Activated T-helper 1 cell treated with anti-CD3 and anti-CD28 coated beads, Interleukin-12 subunit alpha, Interleukin-12 subunit beta, Interleukin-2, Interleukin-4 antibody, amounts not matched to agents 30 ng/mL and 10 ng/mL and 1 ng/mL, durations not matched to agents 14 hours and 24 hours and 36 hours (primary cell): ENCODE measurements at regions of chr11 and their contacts with region 1.

Region 1: GRCh38 chr11:6402561-6402981 is 12.3 kb downstream of the SMPD1 start:
- DNase-seq: peak; percentile 79
- H3K4me3 Mint-ChIP-seq: peak overlapping the region; percentile 80
- H3K27ac Mint-ChIP-seq: peak overlapping the region; percentile 78
- H3K4me1 Mint-ChIP-seq: peaks cover 58% of the 10 kb centered on the region
- H3K27me3 Mint-ChIP-seq: no peaks in the 10 kb centered on the region

Region 2: GRCh38 chr11:6389921-6390724 is 12.4 kb before region 1 on chr11 and contains the start of gene SMPD1:
- intact Hi-C with region 1: loop called (anchors 1 kb)
- DNase-seq: peak; percentile 89
- H3K4me3 Mint-ChIP-seq: peak within 1 kb of the TSS; percentile 86
- H3K27ac Mint-ChIP-seq: peak within 1 kb of the TSS; percentile 98
- H3K4me1 Mint-ChIP-seq: peaks cover 20% of the 10 kb centered on the region
- H3K27me3 Mint-ChIP-seq: peaks cover 7% of the 10 kb centered on the region
- total RNA-seq, gene SMPD1: 8.5 and 9.4 TPM in 2 replicates

Region 3: GRCh38 chr11:6413791-6414201 is 11.2 kb after region 1 on chr11:
- intact Hi-C with region 1: loop called (anchors 1 kb)
- DNase-seq: no peak
- H3K4me3 Mint-ChIP-seq: no peak overlapping the region
- H3K27ac Mint-ChIP-seq: no peak overlapping the region
- H3K4me1 Mint-ChIP-seq: no peaks in the 10 kb centered on the region
- H3K27me3 Mint-ChIP-seq: no peaks in the 10 kb centered on the region

Region 4: DNA sequence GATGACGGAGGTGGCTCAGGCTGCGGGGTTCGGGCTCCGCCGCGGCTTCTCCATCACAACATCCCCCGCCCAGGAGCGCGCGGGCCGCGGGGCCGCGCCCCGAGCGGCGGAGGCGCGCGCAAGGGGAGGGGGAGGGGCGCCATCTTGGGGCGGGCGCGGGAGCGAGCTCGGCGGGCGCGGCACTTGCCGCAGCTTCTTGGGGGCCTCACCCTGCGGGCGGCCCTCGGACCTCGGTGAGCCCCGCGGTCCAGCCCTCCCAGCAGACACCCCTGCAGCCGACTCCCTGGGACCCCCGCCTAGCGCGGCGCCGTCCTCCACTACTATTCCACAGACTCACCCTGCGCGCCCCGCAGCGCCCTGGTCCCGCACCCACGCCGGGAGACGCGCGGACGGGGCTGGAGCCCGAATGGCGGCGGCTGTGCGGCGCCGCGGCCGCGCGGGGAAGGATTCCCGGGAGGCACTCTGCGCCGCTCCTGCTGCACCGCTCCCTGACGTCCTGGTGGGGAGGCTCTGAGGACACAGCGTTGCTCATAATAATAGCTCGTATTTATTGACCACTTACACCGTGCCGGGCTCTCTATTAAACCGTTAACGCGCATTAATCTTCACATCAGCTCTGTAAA is 16.5 kb after region 1 on chr11 and contains the start of gene APBB1:
- intact Hi-C with region 1: loop called (anchors 2 kb)
- DNase-seq: peak; percentile 63
- H3K4me3 Mint-ChIP-seq: peak within 1 kb of the TSS; percentile 77
- H3K27ac Mint-ChIP-seq: no peak within 1 kb of the TSS
- H3K4me1 Mint-ChIP-seq: no peaks in the 10 kb centered on the region
- H3K27me3 Mint-ChIP-seq: peaks cover 32% of the 10 kb centered on the region
- total RNA-seq, gene APBB1: 16.5 and 16.8 TPM in 2 replicates

Region 5: DNA sequence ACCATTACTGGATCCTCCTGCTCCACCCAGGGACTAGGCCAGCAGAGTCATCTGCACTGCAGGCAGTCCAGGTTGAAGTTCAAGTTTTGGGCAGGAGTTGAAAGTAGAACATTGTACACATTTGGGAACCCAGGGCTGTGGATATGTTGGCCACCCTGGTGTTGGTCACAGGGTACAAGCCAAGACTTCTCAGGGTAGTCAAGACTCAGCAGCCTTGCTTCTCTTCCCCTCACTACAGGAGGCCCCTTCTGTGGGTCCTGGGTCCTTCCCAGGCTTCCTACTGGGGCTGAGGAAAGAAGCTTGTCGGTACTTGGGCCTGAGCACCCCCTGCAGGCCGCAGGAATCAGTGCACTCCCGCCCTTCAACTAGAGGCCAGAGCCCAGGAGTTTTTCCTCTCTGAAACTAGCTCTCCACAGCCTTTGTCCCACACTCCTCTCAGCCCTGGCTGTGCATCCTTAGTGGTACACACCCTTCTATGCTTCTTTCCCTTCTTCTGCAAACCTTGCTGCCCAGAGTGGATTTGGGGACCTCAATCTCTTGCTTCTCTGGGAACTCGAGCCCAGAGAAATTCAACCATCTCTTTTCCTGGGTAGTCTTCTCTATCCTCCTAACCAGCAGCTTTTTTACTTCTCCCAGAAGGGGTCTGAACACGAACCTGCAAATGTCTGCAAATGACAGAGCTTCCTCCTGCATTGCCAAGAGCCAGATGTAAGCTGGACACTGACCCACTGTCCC is 40.9 kb after region 1 on chr11:
- intact Hi-C with region 1: loop called (anchors 5 kb)
- DNase-seq: peak; percentile 39
- H3K4me3 Mint-ChIP-seq: no peak overlapping the region
- H3K27ac Mint-ChIP-seq: no peak overlapping the region
- H3K4me1 Mint-ChIP-seq: no peaks in the 10 kb centered on the region
- H3K27me3 Mint-ChIP-seq: peaks cover 8% of the 10 kb centered on the region

Region 6: DNA sequence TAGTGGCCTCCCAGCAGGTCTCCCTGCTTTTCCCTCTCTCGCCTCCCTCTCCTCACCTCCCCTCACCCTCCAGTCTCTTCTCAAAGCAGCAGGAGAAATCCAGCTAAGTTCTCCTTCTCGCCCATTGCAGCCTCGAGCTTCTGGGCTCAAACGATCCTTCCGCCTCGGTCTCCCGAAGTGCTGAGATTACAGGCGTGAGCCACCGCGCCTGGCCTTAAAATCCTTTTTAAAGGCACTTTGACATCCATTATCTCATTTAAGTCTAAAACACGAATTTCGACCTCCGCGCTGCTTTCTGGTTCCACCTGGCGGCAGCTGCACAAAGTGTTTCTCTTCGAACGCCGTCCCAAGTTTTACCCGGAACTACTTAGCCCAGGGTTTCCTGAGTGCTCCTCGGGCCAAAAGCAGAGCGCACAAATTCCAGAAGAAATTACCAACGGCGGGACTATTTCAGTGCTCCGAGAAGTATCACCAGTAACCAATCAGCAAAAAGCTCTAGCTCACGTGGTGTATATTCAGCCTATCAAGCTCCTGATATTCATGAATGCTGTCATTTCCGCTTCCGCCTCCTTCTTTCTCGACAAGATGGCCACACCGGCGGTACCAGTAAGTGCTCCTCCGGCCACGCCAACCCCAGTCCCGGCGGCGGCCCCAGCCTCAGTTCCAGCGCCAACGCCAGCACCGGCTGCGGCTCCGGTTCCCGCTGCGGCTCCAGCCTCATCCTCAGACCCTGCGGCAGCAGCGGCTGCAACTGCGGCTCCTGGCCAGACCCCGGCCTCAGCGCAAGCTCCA is 1584.4 kb after region 1 on chr11 and contains the start of gene EIF3F:
- intact Hi-C with region 1: loop called (anchors 2 kb)
- DNase-seq: peak; percentile 91
- H3K4me3 Mint-ChIP-seq: peak within 1 kb of the TSS; percentile 99
- H3K27ac Mint-ChIP-seq: peak within 1 kb of the TSS; percentile 93
- H3K4me1 Mint-ChIP-seq: peaks cover 39% of the 10 kb centered on the region
- H3K27me3 Mint-ChIP-seq: peaks cover 2% of the 10 kb centered on the region
- total RNA-seq, gene EIF3F: 210 and 214 TPM in 2 replicates